Activated CD4-positive, alpha-beta memory T cell treated with anti-CD3 and anti-CD28 coated beads for 36 hours (primary cell): ENCODE measurements at regions of chr16 and their contacts with region 1.

Region 1: DNA sequence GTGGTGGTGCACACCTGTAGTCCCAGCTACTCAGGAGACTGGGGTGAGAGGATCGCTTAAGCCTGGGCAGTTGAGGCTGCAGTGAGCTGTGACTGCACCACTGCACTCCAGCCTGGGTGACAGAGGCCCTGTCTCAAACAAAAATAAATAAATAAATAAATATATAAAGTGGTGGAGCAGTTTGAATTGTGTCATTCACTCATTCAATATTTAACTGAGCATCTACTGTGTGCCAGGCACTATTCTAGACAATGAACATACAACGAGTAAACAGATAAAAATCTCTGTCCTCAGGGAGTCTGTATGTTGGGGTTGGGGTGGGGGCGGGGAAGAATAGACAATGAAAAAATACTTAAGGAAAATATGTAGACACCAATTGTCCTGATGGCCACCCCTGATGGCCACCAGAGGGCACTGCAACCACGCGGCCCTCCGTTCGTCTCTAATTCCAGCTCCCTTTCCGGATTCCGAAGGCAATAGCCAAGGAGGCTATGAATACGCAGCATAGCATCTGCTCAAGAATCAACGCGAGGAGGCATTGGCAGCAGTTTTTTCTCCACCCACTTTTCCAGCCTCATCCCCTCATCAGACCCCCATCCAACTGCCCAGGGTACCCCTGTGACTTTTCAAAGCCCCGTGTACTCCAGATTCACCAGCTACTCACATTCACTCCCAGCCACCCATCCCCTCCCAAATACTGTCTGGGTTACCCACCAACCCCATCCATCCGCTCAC is 21.4 kb downstream of the QPRT start:
- DNase-seq: peak; percentile 86
- H3K4me3 Mint-ChIP-seq: peak overlapping the region; percentile 26
- H3K27ac Mint-ChIP-seq: peak overlapping the region; percentile 80
- H3K4me1 Mint-ChIP-seq: peaks cover 34% of the 10 kb centered on the region
- H3K27me3 Mint-ChIP-seq: no peaks in the 10 kb centered on the region

Region 2: DNA sequence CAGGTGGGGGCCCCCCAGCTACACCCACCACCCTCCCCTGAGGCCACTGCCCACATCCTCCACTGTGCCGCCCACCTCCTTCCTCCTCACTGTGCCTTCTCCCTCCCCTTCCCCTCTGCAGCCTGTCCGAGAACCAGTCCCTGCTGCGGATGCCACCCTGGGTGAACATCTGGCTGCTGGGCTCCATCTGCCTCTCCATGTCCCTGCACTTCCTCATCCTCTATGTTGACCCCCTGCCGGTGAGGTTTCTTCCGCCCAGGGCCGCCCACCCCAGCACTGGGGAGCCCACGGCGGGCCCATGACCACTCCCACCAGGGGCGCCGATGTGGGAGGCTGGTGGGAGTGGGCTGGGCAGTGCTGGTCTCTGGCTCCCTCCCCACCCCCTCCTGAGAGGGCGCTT is 797.5 kb before region 1 on chr16:
- CTCF ChIA-PET with region 1: no interaction called
- POLR2A ChIA-PET with region 1: no interaction called
- intact Hi-C with region 1: no loop called
- DNase-seq: no peak
- H3K4me3 Mint-ChIP-seq: no peak overlapping the region
- H3K27ac Mint-ChIP-seq: no peak overlapping the region
- H3K4me1 Mint-ChIP-seq: no peaks in the 10 kb centered on the region
- H3K27me3 Mint-ChIP-seq: no peaks in the 10 kb centered on the region

Region 3: GRCh38 chr16:29729116-29729521 is 28.7 kb after region 1 on chr16:
- CTCF ChIA-PET with region 1: interaction called, 16 read pairs
- POLR2A ChIA-PET with region 1: interaction called, 3 read pairs
- intact Hi-C with region 1: loop called (anchors 1 kb)
- DNase-seq: no peak
- H3K4me3 Mint-ChIP-seq: no peak overlapping the region
- H3K27ac Mint-ChIP-seq: no peak overlapping the region
- H3K4me1 Mint-ChIP-seq: peaks cover 27% of the 10 kb centered on the region
- H3K27me3 Mint-ChIP-seq: no peaks in the 10 kb centered on the region

Region 4: GRCh38 chr16:29790183-29790952 is 89.9 kb after region 1 on chr16 and contains the start of gene KIF22:
- CTCF ChIA-PET with region 1: interaction called, 42 read pairs
- POLR2A ChIA-PET with region 1: interaction called, 4 read pairs
- intact Hi-C with region 1: loop called (anchors 2 kb)
- DNase-seq: peak; percentile 100
- H3K4me3 Mint-ChIP-seq: peak within 1 kb of the TSS; percentile 100
- H3K27ac Mint-ChIP-seq: peak within 1 kb of the TSS; percentile 97
- H3K4me1 Mint-ChIP-seq: peaks cover 38% of the 10 kb centered on the region
- H3K27me3 Mint-ChIP-seq: no peaks in the 10 kb centered on the region
- total RNA-seq, gene KIF22: 174 to 180 TPM

Region 5: GRCh38 chr16:29825145-29826044 is 125.0 kb after region 1 on chr16:
- CTCF ChIA-PET with region 1: interaction called, 79 read pairs
- POLR2A ChIA-PET with region 1: interaction called, 5 read pairs
- intact Hi-C with region 1: loop called (anchors 1 kb)
- DNase-seq: peak; percentile 72
- H3K4me3 Mint-ChIP-seq: peak overlapping the region; percentile 59
- H3K27ac Mint-ChIP-seq: peak overlapping the region; percentile 95
- H3K4me1 Mint-ChIP-seq: peaks cover 64% of the 10 kb centered on the region
- H3K27me3 Mint-ChIP-seq: no peaks in the 10 kb centered on the region

Region 6: GRCh38 chr16:30032083-30032819 is 331.8 kb after region 1 on chr16:
- CTCF ChIA-PET with region 1: interaction called, 63 read pairs
- POLR2A ChIA-PET with region 1: no interaction called
- intact Hi-C with region 1: no loop called
- DNase-seq: peak; percentile 77
- H3K4me3 Mint-ChIP-seq: no peak overlapping the region
- H3K27ac Mint-ChIP-seq: no peak overlapping the region
- H3K4me1 Mint-ChIP-seq: peaks cover 23% of the 10 kb centered on the region
- H3K27me3 Mint-ChIP-seq: peaks cover 49% of the 10 kb centered on the region